ENCODE measurements at regions of chr2 and their contacts with region 1.

Region 1: DNA sequence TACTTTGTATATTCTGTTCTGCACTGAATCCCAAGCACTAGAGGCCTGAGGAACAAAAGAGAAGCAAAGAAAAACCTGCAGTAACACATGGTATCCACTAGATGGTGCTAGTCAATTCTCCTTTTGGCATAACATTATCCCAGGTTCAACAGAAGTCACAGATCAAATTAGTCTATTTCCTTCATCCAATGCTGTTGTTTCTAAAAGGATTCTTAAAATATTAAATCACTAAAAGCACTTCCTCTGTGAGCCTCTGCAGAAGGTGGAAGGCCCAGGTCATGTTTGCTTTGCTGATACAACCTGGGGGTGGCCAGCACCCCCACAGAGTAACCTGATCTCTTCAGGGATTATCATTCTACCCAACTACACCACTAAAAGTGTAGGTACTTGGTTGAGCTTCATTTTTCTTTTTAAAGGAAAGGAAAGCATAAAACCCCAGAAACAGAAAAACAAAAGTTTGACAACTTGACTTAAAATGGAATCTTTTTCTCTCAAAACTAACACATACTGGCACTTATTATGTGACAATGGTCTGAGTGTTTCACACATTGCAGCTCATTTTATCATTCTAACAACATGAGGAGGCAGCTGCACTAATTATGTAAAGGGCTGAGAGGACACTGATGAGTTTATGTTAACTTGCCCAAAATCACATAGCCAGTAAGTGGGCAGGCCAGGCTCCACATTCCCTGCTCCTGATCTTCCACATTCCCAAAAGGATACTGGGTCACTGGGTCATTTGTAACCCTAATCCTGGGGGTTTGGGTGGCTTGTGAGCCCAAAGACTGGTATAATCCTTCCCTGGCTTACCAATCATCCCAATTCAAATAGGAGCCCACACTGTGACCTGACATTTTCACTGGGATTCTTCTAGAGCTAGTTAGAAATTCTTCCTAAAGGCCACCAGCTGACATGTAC is 66.8 kb upstream of the DNER start:
- DNase-seq: peak; percentile 1 to 61
- H3K4me3 ChIP-seq: no peak overlapping the region
- H3K27ac ChIP-seq: peak overlapping the region; percentile 33
- H3K4me1 ChIP-seq: peaks cover 10% of the 10 kb centered on the region
- H3K27me3 ChIP-seq: no peaks in the 10 kb centered on the region
- CTCF ChIP-seq: peak; percentile 94

Region 2: DNA sequence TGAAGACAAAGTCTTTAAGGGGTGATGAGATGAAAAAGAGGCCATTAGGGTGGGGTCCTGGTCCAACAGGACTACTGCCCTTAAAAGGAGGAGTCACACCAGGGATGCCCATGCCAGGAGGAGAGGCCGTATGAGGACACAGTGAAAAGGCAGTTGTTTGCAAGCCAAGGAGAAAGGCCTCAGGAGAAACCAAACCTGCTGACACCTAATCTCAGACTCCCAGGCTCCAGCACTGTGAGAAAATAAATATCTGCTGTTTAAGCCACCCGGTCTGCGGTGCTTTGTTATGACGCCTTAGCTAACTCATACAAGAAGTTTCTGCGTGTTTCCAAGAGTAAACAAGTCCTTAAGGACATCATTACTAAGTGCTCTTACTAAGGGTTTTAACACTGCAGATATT is 160.4 kb before region 1 on chr2:
- CTCF ChIA-PET with region 1: no interaction called
- POLR2A ChIA-PET with region 1: no interaction called
- intact Hi-C with region 1: no loop called
- DNase-seq: no peak
- H3K4me3 ChIP-seq: no peak overlapping the region
- H3K27ac ChIP-seq: no peak overlapping the region
- H3K4me1 ChIP-seq: no peaks in the 10 kb centered on the region
- H3K27me3 ChIP-seq: no peaks in the 10 kb centered on the region
- CTCF ChIP-seq: no peak

Region 3: GRCh38 chr2:229800997-229801754 is 20.1 kb after region 1 on chr2:
- CTCF ChIA-PET with region 1: interaction called, 23 read pairs
- POLR2A ChIA-PET with region 1: no interaction called
- intact Hi-C with region 1: no loop called
- DNase-seq: peak; percentile 35 to 37
- H3K4me3 ChIP-seq: no peak overlapping the region
- H3K27ac ChIP-seq: no peak overlapping the region
- H3K4me1 ChIP-seq: no peaks in the 10 kb centered on the region
- H3K27me3 ChIP-seq: no peaks in the 10 kb centered on the region
- CTCF ChIP-seq: peak; percentile 79

Region 4: DNA sequence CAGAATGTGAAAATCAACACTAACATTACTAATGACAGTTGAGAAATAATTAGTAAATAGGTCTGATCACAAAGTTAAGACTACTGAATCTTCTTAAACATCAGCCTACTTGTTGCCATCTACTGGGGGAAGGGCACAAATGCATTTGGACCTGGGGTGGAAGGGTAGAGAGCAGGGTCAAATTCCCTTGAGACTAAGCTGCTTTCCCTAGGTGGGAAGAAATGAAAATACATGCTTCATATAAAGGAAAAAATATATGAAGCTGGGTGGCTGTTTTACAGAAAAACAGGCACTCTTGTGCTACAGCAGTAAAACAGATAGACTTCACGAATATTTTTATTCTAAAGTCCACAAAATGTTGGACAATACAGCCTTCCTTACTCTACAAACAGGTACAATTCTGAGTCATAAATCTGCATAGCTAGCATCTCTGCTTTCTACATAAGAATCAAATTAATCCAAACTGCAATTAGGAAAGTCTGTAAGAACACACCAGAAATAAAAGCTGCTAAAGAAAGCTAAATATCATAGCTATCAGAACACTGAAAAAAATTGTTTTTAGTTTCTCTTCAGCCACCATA is 129.8 kb after region 1 on chr2:
- CTCF ChIA-PET with region 1: no interaction called
- POLR2A ChIA-PET with region 1: no interaction called
- intact Hi-C with region 1: no loop called
- DNase-seq: no peak
- H3K4me3 ChIP-seq: no peak overlapping the region
- H3K27ac ChIP-seq: peak overlapping the region; percentile 28; the same call in 1 of the 2 replicates
- H3K4me1 ChIP-seq: no peaks in the 10 kb centered on the region
- H3K27me3 ChIP-seq: no peaks in the 10 kb centered on the region
- CTCF ChIP-seq: no peak; the same call in 1 of the 2 replicates

Measured in PC-9 (cell line).